AG04449 (cell line): ENCODE measurements at regions of chr3 and their contacts with region 1.

Region 1: DNA sequence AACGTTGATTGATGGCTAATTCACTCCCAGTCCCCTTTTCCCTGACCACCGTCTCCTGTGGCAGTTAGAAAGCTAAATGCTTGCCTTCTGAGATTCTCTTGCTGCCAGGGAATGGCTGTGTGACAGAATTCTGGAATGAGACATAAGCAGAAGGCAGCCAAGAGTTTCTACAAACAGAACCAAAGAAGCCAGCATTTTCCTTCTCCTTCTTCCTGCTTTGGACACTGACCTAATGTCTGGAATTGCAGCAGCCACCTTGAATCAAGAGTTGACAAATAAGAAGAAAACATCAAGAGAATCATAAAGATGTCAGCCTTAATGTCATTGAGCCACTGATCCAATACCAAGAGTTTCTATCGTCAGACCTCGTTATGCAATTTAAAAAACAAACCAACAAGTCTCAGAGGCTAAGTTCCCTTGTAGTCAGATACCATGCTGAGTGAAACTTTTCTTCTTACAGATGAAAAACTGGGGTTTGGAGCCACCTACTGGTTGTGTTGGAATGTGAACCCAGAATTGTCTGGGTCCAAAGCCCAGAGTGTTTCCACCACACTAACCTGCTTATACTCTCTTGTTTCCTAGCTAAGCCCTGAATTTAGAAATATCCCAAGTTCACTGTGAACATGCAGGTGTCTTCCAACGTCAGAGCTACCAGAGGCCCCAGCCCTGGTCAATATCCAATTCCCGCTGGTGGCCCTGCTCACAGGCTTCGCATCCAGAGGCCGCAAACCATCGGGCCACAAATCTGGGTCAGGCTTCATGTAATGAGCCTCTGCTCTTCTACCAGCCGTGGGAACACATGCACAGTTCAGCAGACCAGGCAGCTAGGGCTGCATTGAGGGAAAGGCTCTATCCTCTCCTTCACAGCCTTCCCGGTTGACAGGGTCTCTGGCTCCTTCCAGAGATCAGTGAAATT is 42.5 kb downstream of the MCF2L2 start:
- DNase-seq: peak; percentile 29
- H3K4me3 ChIP-seq: no peak overlapping the region
- CTCF ChIP-seq: peak; percentile 66

Region 2: GRCh38 chr3:183092256-183092655 is 293.7 kb before region 1 on chr3:
- CTCF ChIA-PET with region 1: no interaction called
- POLR2A ChIA-PET with region 1: no interaction called
- DNase-seq: no peak
- H3K4me3 ChIP-seq: no peak overlapping the region
- CTCF ChIP-seq: no peak

Region 3: DNA sequence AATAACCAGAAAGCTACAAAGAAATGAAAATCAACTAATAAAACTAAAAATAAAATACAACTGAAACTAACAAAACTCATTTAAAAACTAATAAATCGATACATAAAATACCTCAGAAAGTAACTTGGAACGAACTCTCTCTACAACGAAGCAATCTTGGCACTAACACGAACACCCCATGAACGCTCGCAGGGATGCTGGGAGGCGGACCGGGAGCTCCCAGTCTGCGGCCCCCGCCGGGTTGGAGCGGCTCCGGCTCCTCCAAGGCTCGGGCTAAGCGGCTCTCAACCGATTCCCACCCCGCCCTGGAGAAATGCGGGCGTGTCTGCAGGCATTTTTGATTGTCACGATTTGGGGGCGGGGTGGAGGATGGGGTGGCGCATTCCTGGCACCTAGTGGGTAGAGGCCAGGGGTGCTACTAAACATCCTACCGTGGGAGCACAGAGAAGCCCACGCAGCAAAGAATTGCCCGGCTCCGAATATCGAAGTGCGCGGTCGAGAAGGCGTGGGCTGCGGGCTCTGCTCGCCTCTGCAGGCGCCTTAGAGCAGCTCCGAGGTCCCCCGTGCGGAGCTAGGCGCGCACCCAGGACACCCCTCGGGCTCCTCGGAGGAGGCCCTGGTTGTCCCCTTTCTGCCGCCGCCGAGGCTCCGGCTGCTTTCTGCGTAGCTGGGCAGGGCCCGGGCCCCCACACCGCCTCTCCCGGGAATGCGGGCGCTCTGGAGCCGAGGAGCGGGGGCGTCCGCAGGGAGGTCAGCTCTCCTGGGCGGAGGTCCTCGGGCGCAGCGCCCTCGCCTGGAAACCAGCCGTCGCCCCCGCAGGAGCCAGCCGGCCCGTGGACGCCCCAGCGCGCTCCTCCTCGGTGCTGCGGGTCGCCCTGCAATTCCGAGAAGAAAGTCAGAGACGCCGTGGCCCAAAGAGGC is 207.1 kb before region 1 on chr3:
- CTCF ChIA-PET with region 1: interaction called, 790 read pairs
- POLR2A ChIA-PET with region 1: no interaction called
- DNase-seq: no peak
- H3K4me3 ChIP-seq: peak overlapping the region; percentile 51
- CTCF ChIP-seq: peak; percentile 19

Region 4: DNA sequence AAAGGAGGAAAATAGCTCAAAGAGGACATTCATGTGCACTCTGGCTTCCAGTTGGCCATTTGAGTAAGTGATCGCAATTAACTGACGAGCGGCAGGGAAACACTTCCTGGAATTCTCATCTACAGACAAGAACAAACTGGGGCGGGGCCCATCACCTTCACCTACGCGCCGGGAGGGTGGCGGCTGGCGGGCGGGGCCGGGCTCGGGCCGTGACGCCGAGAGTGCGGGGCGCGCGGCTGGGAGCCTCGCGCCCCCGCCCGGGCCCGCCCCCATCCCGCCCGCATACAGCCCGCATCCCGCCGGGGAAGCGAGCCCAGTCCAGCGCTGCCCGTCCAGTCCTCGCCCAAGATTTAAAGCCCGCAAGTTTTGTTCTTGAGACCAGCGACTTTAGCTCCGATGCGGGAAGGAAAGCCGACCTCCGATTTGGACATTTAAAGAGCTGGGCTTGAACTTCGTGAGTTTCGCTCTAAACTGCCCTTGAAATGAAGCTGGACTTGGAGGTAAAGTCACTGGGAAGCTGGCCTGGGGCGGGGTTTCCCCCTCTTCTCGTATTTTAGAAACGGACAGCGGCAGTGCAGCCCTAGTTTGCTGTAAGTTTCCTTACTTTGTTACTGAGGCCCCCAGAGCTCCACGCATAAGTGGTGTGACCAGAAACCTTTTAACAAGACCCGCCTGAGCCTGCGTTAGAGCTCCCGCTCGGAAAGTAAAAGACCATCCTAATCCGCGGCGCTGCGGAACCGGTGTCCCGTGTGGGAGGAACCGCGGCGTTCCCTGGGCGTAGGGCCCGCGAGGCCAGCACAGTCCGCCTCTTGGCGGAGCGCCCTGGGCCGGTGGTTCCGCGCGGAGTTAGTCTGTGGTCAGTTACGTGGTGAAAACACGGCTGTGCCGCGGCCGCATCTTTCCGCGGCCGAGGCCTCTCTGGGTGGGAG is 132.7 kb before region 1 on chr3 and contains the start of gene B3GNT5:
- CTCF ChIA-PET with region 1: interaction called, 20 read pairs
- POLR2A ChIA-PET with region 1: no interaction called
- DNase-seq: no peak
- H3K4me3 ChIP-seq: peak within 1 kb of the TSS; percentile 69
- CTCF ChIP-seq: no peak

Region 5: DNA sequence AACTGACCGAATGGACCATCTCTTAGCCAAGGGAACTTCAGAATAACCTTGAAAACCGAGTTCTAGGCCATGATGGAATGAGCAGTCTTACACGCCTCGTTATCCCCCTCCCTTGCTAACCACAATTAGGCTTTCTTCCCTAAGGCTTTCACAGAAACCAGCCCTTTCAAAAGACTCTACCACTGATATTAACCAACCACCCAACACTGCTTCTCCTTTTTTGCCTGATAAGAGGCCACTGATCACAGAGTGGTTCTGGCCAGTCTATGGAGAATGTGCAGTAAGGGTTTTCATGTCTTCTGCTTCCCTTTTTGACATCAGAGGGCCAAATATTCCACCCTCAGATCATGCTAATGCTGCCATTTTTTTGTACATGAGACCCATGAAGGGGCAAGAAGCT is 16.8 kb before region 1 on chr3:
- CTCF ChIA-PET with region 1: interaction called, 32 read pairs
- POLR2A ChIA-PET with region 1: no interaction called
- DNase-seq: no peak
- H3K4me3 ChIP-seq: no peak overlapping the region
- CTCF ChIP-seq: no peak

Region 6: DNA sequence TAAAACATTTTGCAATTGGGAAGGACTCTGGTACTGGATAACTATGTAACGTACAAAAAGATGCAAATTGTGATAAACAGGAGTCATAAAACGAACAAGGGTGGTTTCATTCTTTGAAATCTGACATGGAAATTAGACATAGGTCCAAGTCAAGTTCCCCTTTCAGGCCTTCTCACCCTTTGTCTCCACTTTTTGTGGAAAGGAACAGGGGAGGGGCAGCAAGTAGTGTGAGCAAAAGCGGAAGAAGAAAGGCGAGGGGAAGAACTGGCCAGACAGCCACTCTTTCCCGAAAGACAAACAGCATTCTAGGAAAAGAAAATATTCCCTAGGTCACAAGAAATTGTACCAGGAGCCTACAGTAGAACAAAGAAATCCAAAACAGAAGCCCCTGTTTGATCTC is 10.2 kb before region 1 on chr3:
- CTCF ChIA-PET with region 1: interaction called, 32 read pairs
- POLR2A ChIA-PET with region 1: no interaction called
- DNase-seq: no peak
- H3K4me3 ChIP-seq: no peak overlapping the region
- CTCF ChIP-seq: no peak

Region 7: GRCh38 chr3:183477801-183478456 is 92.0 kb after region 1 on chr3:
- CTCF ChIA-PET with region 1: no interaction called
- POLR2A ChIA-PET with region 1: no interaction called
- DNase-seq: no peak
- H3K4me3 ChIP-seq: no peak overlapping the region
- CTCF ChIP-seq: no peak